ENCODE measurements at regions of chr2 and their contacts with region 1.

Region 1: GRCh38 chr2:112626604-112627059 is 19.1 kb upstream of the SLC20A1 start:
- DNase-seq: peak; percentile 75
- CTCF ChIP-seq: peak; percentile 93

Region 2: GRCh38 chr2:112726497-112727190 is 100.0 kb after region 1 on chr2:
- in situ Hi-C with region 1: loop called (anchors 10 kb)
- DNase-seq: peak; percentile 94
- CTCF ChIP-seq: peak; percentile 99

Region 3: DNA sequence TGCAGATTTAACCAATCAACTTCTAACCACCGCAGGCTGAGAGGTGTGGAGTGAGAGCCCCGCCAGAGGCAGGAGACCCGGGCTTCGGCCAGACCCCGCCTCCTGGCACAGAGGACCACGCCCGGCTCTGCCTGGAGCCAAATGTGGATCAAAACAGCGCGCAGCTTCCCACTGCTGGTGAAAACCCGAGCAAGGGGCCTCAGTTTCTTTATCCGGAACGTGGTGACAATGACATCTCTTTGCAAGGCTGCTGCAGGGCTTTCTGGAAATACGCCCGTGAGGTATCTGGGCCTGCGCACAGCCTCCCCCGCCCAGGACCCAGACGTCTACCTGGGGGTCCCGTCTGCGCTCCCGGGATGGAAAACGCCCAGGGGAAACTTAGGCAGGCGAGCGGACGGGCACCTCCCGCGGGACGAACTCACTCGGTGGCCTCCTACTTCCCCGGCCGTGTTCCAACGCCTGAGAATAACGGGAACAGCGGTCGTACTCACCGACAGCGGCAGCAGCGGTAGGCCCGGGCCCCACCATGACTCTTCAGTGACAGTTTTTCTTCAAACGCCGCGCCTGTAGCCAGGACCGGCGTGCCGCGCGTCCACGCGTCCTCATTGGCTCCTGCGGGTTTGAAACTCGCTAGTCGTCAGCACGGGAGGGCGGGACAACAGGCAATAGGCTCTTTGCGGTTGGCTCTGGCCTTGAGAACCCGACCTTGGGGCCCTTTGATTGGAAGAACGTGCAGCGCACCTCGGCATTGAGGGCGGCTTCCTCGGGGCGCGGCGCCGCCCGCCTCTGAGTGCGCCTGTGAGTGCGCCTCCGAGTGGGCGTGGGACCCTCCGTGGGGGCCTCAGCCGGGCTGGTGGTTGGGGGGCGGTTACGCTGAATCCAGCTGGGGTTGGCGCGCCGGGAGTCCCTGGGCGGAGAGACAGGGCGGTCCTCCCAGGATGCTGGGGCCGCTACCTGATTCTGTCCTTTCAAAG is 137.7 kb after region 1 on chr2 and contains the start of gene CKAP2L:
- in situ Hi-C with region 1: no loop called
- DNase-seq: peak; percentile 97
- CTCF ChIP-seq: no peak

Region 4: DNA sequence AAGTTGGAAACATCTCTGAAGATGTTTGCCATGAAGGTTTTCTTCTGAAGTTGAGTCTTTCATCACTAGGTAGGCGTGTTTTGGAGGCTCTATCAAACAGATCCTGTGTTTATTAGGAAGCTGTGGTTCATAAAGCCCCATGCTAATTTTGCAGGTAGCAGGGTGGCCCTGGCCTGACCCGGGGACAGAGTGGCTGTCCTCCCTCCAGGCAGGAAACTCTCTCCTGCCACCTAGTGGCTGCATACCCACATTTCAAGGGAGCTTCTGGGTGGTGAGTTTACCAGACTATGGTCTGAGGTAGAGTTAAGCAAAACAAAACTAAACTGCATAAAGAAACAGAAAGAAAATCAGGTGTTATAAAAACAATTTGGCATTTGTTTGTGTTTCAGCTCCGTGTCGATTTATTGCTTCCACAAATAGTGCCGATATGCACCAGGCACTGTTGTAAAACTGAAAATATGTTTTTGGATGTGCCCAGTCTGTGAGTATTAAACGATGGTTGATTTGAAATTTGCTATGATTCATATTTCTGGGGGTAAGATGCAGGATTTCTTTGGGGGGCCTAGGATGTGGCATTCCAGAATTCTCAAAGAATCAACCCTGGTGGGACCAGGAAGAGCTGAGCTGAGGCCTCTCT is 258.4 kb after region 1 on chr2:
- in situ Hi-C with region 1: loop called (anchors 25 kb)
- DNase-seq: peak; percentile 85
- CTCF ChIP-seq: peak; percentile 89

Region 5: GRCh38 chr2:112941753-112942658 is 315.4 kb after region 1 on chr2:
- in situ Hi-C with region 1: loop called (anchors 10 kb)
- DNase-seq: peak; percentile 68
- CTCF ChIP-seq: peak; percentile 96

Measured in GM13976 (cell line).